PC-3 (cell line): ENCODE measurements at regions of chr1 and their contacts with region 1.

Region 1: DNA sequence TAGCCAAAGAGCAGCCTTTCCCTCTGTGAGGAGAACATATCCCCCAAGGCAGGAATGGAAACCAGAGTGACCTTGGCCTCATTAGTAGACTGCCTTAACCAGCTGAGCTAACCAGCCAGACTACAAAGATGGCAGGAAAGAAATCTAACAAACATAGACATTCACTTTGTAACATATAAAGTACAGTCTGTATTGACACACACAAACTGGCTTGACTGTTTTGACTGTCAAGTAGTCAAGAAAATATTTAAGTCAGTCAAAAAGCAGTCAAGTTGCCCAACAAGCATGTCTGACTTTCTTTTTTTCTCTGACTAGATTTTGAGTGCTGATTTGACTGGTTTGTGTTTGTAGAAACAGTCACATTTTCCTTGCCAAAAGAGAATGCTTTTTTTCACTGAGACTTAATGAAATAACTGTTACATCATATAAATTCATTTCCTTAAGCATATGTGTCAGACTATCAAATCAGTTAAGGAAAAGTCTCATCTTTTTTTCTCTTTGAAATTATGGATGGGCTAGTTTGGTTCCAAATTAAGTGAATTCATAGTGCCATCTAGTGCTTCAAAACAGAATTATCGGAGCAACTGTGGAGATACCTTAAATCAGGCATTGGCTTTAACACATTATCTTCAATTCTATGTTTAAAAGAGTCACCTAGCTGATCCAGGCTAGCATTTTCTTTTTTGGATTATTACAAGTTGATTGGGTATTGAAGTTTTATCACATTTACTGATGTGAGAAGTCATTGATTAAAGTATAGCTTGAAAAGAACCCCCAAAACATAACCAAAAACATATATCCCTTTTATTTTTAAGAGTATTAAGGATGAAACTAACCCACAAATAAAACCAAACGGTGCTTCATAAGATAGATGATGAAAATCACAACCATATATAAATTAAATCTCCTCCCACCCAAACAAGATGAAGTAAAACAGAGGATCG is 75.0 kb downstream of the ATP6V1G3 start:
- DNase-seq: peak; percentile 74
- ATAC-seq: peak; percentile 48
- H3K4me3 ChIP-seq: no peak overlapping the region
- H3K27ac ChIP-seq: peak overlapping the region; percentile 17; the same call in 1 of the 2 replicates
- H3K4me1 ChIP-seq: peaks cover 29% of the 10 kb centered on the region
- H3K27me3 ChIP-seq: no peaks in the 10 kb centered on the region
- CTCF ChIP-seq: peak; percentile 73

Region 2: GRCh38 chr1:197924516-197925123 is 540.9 kb before region 1 on chr1:
- CTCF ChIA-PET with region 1: no interaction called
- POLR2A ChIA-PET with region 1: no interaction called
- intact Hi-C with region 1: loop called (anchors 10 kb)
- DNase-seq: peak; percentile 68
- ATAC-seq: peak; percentile 76
- H3K4me3 ChIP-seq: no peak overlapping the region
- H3K27ac ChIP-seq: no peak overlapping the region
- H3K4me1 ChIP-seq: no peaks in the 10 kb centered on the region
- H3K27me3 ChIP-seq: no peaks in the 10 kb centered on the region
- CTCF ChIP-seq: peak; percentile 72

Region 3: GRCh38 chr1:198157241-198157846 is 308.1 kb before region 1 on chr1:
- CTCF ChIA-PET with region 1: no interaction called
- POLR2A ChIA-PET with region 1: no interaction called
- intact Hi-C with region 1: loop called (anchors 5 kb)
- DNase-seq: peak; percentile 87
- ATAC-seq: peak; percentile 50
- H3K4me3 ChIP-seq: peak overlapping the region; percentile 81
- H3K27ac ChIP-seq: peak overlapping the region; percentile 38
- H3K4me1 ChIP-seq: peaks cover 32% of the 10 kb centered on the region
- H3K27me3 ChIP-seq: no peaks in the 10 kb centered on the region
- CTCF ChIP-seq: no peak

Region 4: GRCh38 chr1:198234520-198235251 is 230.8 kb before region 1 on chr1:
- CTCF ChIA-PET with region 1: no interaction called
- POLR2A ChIA-PET with region 1: no interaction called
- intact Hi-C with region 1: no loop called
- DNase-seq: peak; percentile 43
- ATAC-seq: peak; percentile 74
- H3K4me3 ChIP-seq: peak overlapping the region; percentile 61
- H3K27ac ChIP-seq: peak overlapping the region; percentile 47
- H3K4me1 ChIP-seq: peaks cover 15% of the 10 kb centered on the region
- H3K27me3 ChIP-seq: no peaks in the 10 kb centered on the region
- CTCF ChIP-seq: no peak

Region 5: DNA sequence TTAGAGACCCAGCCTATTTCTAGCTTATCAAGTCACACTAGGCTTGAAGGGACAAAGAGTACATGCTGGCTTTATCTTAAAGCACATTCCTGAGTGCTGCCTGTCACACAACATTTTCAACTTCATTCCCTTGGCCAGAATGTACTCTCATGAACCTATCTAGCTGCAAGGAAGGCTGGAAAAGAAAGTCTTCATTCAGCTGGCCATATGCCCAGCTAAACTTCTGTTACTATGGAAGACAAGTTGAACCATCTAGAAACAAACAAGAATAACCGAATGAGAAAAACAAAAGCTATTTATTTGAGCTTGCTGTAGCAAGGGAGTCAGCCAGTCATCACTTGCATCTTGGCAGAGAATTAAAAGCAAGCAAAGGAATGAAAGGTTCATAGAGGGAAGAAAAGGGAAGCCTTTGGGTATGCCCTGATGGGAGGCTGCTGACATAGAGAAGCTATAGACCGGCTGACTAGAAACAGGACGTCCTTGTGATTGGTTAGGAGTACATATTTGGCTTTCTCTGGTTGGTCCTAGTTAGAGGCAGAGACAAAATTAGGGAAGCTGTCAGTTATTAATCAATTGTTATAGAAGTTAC is 200.3 kb before region 1 on chr1:
- CTCF ChIA-PET with region 1: no interaction called
- POLR2A ChIA-PET with region 1: no interaction called
- intact Hi-C with region 1: loop called (anchors 10 kb)
- DNase-seq: no peak
- ATAC-seq: no peak
- H3K4me3 ChIP-seq: no peak overlapping the region
- H3K27ac ChIP-seq: no peak overlapping the region
- H3K4me1 ChIP-seq: peaks cover 23% of the 10 kb centered on the region
- H3K27me3 ChIP-seq: no peaks in the 10 kb centered on the region
- CTCF ChIP-seq: no peak

Region 6: DNA sequence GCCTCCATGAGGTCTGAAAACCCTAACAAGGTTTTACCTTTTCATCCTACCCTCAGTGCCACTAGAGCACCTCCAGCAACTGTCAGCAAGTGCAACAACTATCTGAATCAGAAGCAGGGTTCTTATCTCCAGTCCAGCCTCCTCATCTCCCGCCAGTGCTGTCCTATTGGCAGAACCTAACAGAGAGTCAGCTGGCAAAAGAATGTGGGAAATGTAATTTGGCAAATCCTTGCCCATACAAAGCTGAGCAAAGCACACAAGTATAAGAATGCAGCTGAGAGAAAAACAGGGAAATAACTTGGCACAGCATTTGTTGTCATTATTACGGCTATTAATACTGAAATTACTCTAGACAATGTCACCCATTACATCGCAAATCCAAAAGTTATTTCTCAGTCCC is 49.2 kb before region 1 on chr1:
- CTCF ChIA-PET with region 1: no interaction called
- POLR2A ChIA-PET with region 1: no interaction called
- intact Hi-C with region 1: no loop called
- DNase-seq: no peak
- ATAC-seq: no peak
- H3K4me3 ChIP-seq: no peak overlapping the region
- H3K27ac ChIP-seq: no peak overlapping the region
- H3K4me1 ChIP-seq: no peaks in the 10 kb centered on the region
- H3K27me3 ChIP-seq: no peaks in the 10 kb centered on the region
- CTCF ChIP-seq: no peak

Region 7: DNA sequence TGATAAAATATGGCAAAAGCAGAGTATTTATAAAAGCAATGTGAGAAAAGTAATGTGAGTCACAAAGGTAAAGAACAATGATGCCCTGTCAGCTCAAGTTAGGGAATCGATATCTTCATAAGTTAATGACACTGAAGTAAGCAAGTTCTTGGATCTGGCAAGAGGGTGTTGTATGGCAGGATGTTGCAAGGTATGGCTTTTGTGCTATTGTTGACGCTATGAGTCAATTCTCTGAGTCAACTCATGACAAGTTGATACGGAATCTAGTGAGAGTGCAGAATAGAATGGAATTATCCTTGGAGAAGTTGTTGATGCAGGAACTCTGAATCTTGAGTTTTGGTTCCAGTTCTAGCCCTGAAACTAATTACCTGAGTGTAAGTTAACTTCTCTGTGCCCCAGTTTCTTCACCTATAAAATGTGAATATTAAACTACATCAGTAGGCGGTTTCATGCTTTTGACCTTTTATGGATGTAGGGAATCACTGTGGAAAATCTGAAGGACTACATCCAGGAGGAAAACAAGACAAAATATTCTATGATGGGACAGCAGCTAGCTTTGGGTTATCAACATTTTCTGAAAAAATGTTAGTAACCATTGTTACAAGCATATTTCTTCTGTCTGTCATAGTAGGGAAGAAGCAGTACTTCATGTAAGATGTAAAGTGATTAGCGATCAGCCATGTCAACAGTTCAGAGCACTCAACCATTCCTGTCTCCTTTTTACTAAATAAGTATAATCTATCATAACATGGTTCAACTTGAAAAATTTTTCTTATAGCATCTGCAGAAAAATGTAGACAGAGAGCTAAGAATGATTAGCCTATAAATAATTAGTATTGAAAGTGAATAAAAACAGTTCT is 21.9 kb before region 1 on chr1:
- CTCF ChIA-PET with region 1: no interaction called
- POLR2A ChIA-PET with region 1: no interaction called
- intact Hi-C with region 1: loop called (anchors 1 kb)
- DNase-seq: peak; percentile 93
- ATAC-seq: peak; percentile 93
- H3K4me3 ChIP-seq: 0 out of 2 replicates have a peak overlapping the region, but pooled peaks have one; percentile 14
- H3K27ac ChIP-seq: peak overlapping the region; percentile 95
- H3K4me1 ChIP-seq: peaks cover 33% of the 10 kb centered on the region
- H3K27me3 ChIP-seq: no peaks in the 10 kb centered on the region
- CTCF ChIP-seq: no peak